Esophagus muscularis mucosa (tissue), 4 donors: ENCODE measurements at regions of chr3 and their contacts with region 1.

Region 1: DNA sequence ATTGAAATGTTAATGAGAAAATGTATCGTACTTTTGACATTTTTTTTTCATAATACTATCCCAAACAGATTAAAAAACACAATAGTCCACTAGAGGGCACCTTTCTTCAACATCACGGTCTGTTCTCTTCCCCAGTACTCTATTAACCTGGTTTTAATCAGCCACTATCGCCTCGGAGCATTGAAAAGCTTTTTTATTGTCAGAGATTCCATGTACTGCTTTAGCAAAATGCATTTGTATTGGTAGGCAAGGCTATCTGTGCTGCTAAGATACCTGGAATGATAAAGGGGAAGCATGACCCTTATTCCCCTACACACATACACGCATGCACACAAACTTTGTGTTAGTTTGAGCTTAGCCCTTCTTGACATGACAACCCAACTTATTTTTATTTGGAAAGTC is 160.1 kb upstream of the IL12A start:
- DNase-seq: no peak
- H3K4me3 ChIP-seq: peak overlapping the region in 1 of 4 donors; percentile 1
- H3K27ac ChIP-seq: peak overlapping the region in 3 of 4 donors; percentile 12 to 54 (median 50)
- H3K4me1 ChIP-seq: peaks cover 43 to 69% (median 65%) of the 10 kb centered on the region in 4 donors
- H3K27me3 ChIP-seq: no peaks in the 10 kb centered on the region
- CTCF ChIP-seq: peak; percentile 56 to 60 (median 59)
- EP300 ChIP-seq: no peak
- POLR2A ChIP-seq: no peak

Region 2: DNA sequence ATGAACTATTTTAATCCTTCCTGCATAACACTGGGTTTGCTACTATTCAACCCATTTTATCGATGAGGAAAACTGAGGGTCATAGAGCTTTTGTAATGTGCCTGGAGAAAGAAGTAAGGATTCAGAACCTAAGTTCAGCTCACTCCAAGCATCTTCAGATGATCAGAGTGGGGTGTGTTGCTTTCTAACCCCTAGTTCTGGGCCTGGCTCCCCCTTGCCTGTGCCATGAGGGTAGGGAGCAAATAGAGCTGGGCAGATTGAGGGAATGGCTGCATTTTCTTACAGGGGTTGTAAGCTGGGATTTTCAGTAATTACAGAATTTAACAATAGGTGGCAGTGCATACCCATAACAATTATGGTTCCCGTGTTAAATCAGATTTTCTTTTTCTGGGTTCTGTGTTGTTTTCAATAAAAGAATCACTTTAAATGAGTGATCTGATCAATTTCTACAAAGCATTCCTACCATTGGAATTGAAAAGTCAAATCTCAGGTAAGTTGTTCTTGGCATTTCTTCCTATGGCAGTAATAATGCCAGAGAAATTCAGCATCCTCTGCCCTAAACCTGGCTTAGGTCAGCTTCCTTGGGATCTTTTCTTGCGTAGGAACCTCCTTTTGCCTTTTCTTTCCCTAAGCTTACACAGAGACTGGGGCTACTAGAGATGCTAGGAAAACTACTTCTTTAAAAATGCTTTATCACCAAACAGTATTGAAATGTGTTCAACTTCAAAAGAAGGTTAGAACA is 56.3 kb after region 1 on chr3:
- intact Hi-C with region 1: loop called (anchors 5 kb)
- DNase-seq: peak; percentile 37
- H3K4me3 ChIP-seq: no peak overlapping the region
- H3K27ac ChIP-seq: peak overlapping the region in 2 of 4 donors; percentile 2 to 25
- H3K4me1 ChIP-seq: peaks cover 58 to 78% (median 70%) of the 10 kb centered on the region in 4 donors
- H3K27me3 ChIP-seq: no peaks in the 10 kb centered on the region
- CTCF ChIP-seq: peak; percentile 44 to 61 (median 52)
- EP300 ChIP-seq: no peak
- POLR2A ChIP-seq: no peak